Aorta (tissue), 5 donors: ENCODE measurements at regions of chr1 and their contacts with region 1.

Region 1: GRCh38 chr1:89994805-89995597 is at the start of gene ZNF326:
- DNase-seq: peak; percentile 97 to 99
- ATAC-seq: peak; percentile 100
- H3K4me3 ChIP-seq: peak within 1 kb of the TSS; percentile 46 to 99
- H3K27ac ChIP-seq: peak within 1 kb of the TSS; percentile 72 to 85
- H3K4me1 ChIP-seq: peaks cover 0 to 2% of the 10 kb centered on the region in 2 donors
- H3K27me3 ChIP-seq: no peaks in the 10 kb centered on the region
- total RNA-seq, gene ZNF326: 20.6 to 22.6 TPM

Region 2: GRCh38 chr1:89524369-89525168 is 470.4 kb before region 1 on chr1 and contains the start of gene LRRC8B:
- intact Hi-C with region 1: loop called in 1 of 2 experiments (anchors 10 kb)
- DNase-seq: peak; percentile 93 to 97
- ATAC-seq: peak; percentile 99
- H3K4me3 ChIP-seq: peak within 1 kb of the TSS; percentile 56 to 69
- H3K27ac ChIP-seq: no peak within 1 kb of the TSS
- H3K4me1 ChIP-seq: no peaks in the 10 kb centered on the region
- H3K27me3 ChIP-seq: no peaks in the 10 kb centered on the region
- total RNA-seq, gene LRRC8B: 4.4 to 5.9 TPM

Region 3: DNA sequence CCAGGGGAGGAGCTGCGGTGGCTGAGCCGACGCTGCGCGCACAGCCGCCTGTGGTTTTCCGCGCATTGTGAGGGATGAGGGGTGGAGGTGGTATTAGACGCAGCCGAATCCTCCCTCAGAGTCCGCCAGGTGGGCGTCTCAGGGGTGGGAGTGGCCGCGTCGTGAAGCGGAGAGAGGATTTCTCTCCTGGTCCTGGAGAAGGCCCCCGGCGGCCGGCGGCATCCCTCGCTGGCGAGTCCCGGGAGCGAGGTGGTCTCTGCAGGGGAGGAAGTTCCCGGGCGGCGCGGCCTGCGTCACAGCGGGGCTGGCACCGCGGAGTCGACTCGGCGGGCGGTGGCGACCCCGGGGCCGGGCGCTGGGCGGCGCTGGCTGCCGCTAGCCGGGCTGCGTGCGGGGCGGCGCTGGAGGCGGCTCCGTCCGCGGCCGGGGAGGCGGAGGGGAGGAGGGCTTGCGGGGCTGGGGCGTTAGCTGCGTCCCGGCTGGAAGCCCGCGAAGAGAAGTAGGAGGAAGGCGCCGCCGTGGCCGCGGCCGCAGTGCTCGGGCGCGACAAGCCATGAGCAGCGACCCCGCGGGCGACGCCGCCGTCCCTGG is 362.2 kb before region 1 on chr1 and contains the start of gene LRRC8C:
- intact Hi-C with region 1: loop called in 1 of 2 experiments (anchors 5 kb)
- DNase-seq: peak; percentile 93 to 96
- ATAC-seq: peak; percentile 95
- H3K4me3 ChIP-seq: peak within 1 kb of the TSS; percentile 77 to 95
- H3K27ac ChIP-seq: peak within 1 kb of the TSS; percentile 16 to 85
- H3K4me1 ChIP-seq: no peaks in the 10 kb centered on the region
- H3K27me3 ChIP-seq: no peaks in the 10 kb centered on the region
- total RNA-seq, gene LRRC8C: 9.0 to 14.4 TPM

Region 4: GRCh38 chr1:89820422-89821321 is 174.3 kb before region 1 on chr1 and contains the start of gene LRRC8D:
- intact Hi-C with region 1: loop called in 1 of 2 experiments (anchors 5 kb)
- DNase-seq: peak; percentile 89 to 92
- ATAC-seq: peak; percentile 95
- H3K4me3 ChIP-seq: peak within 1 kb of the TSS; percentile 57 to 89
- H3K27ac ChIP-seq: no peak within 1 kb of the TSS
- H3K4me1 ChIP-seq: no peaks in the 10 kb centered on the region
- H3K27me3 ChIP-seq: no peaks in the 10 kb centered on the region
- total RNA-seq, gene LRRC8D: 4.8 to 10.3 TPM